Activated B cell treated with CpG ODN at 0.5 μM for 24 hours (primary cell): ENCODE measurements at regions of chr10 and their contacts with region 1.

Region 1: DNA sequence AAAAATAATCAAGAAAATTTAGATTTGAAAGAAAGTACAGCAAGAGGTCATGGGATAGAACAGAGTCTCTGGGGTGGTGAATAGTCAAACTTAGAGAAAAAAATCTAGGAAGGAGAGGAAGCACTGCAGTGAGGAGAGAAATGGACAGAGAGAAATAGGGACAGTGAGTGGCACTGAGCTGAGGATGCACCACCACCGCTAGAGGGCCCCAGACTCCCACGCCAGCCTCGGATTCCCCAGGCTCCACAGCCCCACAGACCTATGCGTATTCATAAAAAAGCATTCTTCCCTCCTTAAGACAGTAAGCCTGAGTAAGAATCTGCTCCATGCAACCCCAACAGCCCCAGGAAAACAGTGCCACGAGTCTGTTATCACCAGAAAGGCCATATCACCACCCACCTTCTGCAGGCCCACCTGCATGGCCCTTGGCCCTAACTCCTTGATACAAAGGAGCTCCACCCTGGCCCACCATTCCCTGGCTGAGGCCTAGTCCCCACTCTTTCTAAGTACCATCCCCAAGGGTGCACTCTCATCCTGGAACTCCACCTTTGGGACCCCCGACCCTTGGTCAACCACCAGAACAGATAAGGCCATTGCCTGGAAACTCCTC is 91.0 kb downstream of the ALOX5 start:
- DNase-seq: peak; percentile 70
- ATAC-seq: peak; percentile 68
- H3K4me3 Mint-ChIP-seq: peak overlapping the region; percentile 45
- H3K27ac Mint-ChIP-seq: peak overlapping the region; percentile 98
- H3K4me1 Mint-ChIP-seq: peaks cover 90% of the 10 kb centered on the region
- H3K27me3 Mint-ChIP-seq: no peaks in the 10 kb centered on the region
- CTCF ChIP-seq: peak; percentile 60

Region 2: GRCh38 chr10:44974628-44975431 is 490.2 kb before region 1 on chr10:
- CTCF ChIA-PET with region 1: no interaction called
- POLR2A ChIA-PET with region 1: no interaction called
- intact Hi-C with region 1: no loop called
- DNase-seq: peak; percentile 81
- ATAC-seq: peak; percentile 90
- H3K4me3 Mint-ChIP-seq: peak overlapping the region; percentile 80
- H3K27ac Mint-ChIP-seq: peak overlapping the region; percentile 75
- H3K4me1 Mint-ChIP-seq: peaks cover 28% of the 10 kb centered on the region
- H3K27me3 Mint-ChIP-seq: no peaks in the 10 kb centered on the region
- CTCF ChIP-seq: no peak

Region 3: DNA sequence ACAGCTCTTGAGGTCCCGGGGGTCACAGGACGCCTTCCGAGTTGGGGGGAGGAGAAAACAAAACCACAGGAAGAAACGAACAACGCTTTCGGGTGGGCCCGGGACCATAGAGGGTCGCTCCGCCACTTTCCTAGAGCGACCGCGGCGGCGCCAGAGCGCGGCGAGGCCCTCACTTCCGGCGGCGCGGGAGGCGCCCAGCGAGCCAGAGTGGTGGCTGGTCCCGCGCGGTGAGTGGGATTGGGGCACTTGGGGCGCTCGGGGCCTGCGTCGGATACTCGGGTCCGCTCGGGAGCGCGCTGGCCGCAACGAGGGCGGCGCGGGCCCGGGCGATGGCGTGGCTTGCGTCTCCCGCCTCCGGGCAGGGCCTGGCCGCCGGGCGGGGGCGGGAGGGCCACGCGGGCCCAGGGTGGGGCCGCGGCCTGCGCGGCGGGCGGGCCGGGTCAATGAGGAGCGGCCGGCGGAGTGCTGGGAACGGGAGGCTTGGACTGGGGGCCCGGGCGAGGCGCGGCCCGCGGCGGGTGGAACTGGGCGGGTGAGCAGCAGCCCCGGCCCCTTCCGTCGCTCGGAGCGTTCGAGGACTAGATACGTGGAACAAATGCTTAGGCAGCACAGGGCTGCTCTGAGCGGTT is 464.2 kb before region 1 on chr10 and contains the start of gene ZNF22:
- CTCF ChIA-PET with region 1: no interaction called
- POLR2A ChIA-PET with region 1: no interaction called
- intact Hi-C with region 1: loop called (anchors 5 kb)
- DNase-seq: peak; percentile 76
- ATAC-seq: peak; percentile 82
- H3K4me3 Mint-ChIP-seq: peak within 1 kb of the TSS; percentile 90
- H3K27ac Mint-ChIP-seq: peak within 1 kb of the TSS; percentile 93
- H3K4me1 Mint-ChIP-seq: peaks cover 25% of the 10 kb centered on the region
- H3K27me3 Mint-ChIP-seq: no peaks in the 10 kb centered on the region
- CTCF ChIP-seq: no peak
- total RNA-seq, gene ZNF22: 34.2 and 37.5 TPM in 2 replicates

Region 4: DNA sequence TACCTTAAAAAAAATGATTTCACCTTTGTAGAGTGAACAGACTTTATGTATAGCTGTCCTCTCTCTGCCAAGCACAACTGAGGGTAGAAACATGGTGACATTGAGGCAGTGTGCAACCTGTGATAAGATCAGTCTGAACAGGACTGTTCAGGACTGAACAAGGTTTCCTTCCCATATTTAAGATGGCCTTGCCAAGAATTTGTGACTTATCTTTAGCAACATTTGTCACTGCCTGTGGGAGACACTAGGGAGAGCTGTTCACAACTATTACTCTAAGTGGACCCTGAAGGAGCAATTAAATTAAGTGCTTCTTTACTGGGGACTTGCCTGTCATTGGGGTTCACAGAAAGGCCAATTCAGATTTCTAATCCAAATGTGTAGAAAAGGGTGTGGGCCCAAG is 156.4 kb before region 1 on chr10:
- CTCF ChIA-PET with region 1: interaction called, 5 read pairs
- POLR2A ChIA-PET with region 1: interaction called, 5 read pairs
- intact Hi-C with region 1: loop called (anchors 1 kb)
- DNase-seq: no peak
- ATAC-seq: peak; percentile 18
- H3K4me3 Mint-ChIP-seq: no peak overlapping the region
- H3K27ac Mint-ChIP-seq: no peak overlapping the region
- H3K4me1 Mint-ChIP-seq: peaks cover 3% of the 10 kb centered on the region
- H3K27me3 Mint-ChIP-seq: no peaks in the 10 kb centered on the region
- CTCF ChIP-seq: no peak

Region 5: DNA sequence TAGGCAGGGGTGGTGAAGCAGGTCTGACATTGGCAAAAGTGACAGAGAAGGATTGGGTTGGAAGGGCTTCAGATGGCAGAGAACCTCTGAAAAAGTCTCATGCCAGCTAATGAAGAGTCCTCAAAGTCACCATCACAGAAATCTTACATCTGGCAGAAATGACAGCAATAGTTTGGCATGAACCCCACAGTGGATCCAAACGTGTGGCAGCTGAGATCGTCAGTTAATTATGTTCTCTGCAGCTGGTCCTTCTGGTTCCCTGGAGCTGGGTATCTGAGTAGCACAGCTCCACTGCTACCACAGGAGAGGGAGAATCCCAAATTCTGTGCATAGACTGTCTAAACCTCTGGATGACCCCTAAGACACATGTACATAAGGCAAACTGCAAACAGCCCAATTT is 17.6 kb before region 1 on chr10:
- CTCF ChIA-PET with region 1: interaction called, 5 read pairs
- POLR2A ChIA-PET with region 1: interaction called, 10 read pairs
- intact Hi-C with region 1: no loop called
- DNase-seq: no peak
- ATAC-seq: no peak
- H3K4me3 Mint-ChIP-seq: no peak overlapping the region
- H3K27ac Mint-ChIP-seq: peak overlapping the region; percentile 26
- H3K4me1 Mint-ChIP-seq: peaks cover 5% of the 10 kb centered on the region
- H3K27me3 Mint-ChIP-seq: no peaks in the 10 kb centered on the region
- CTCF ChIP-seq: no peak

Region 6: DNA sequence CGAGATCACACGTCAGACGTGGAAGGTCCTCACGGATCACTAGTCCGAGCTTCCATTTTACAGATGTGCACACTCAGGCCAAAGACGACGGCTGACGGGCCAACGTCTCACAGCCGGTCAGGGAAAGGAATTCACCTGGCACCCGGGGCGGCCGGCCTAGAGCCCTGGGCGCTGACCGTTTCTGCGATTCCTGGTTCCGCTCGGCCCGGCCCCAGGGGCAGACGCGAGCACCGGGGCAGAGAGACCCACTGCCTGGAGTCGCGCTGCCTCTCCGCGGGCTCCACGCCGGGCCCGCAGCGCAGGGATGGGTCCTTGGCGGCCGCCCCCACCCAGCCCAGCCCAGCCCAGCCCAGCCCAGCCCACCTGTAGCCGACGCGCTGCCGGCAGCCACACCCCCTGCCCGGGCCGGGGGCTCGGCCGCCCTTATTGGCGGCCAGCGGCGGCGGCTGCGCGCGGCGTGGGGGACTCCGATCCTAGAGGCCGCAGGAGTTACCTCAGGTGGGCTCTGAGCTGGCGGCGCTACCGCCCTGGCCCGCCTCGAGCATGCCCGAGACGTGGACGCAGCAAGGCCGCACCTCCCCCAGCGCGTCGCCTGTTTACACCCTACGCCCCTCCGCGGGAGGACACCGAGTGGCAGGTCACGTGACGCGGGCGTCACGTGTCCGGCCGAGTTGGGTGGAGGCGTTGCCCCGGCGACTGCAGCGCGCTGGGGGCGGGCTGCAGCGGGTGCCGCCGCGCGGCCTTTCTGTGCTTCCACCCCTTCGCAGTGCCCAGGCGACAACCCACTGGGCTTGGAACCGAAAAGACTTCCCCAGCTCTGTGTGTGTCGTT is 129.4 kb after region 1 on chr10:
- CTCF ChIA-PET with region 1: interaction called, 9 read pairs
- POLR2A ChIA-PET with region 1: interaction called, 4 read pairs
- intact Hi-C with region 1: loop called (anchors 1 kb)
- DNase-seq: peak; percentile 91
- ATAC-seq: peak; percentile 88
- H3K4me3 Mint-ChIP-seq: peak overlapping the region; percentile 86
- H3K27ac Mint-ChIP-seq: peak overlapping the region; percentile 91
- H3K4me1 Mint-ChIP-seq: peaks cover 42% of the 10 kb centered on the region
- H3K27me3 Mint-ChIP-seq: no peaks in the 10 kb centered on the region
- CTCF ChIP-seq: no peak

Region 7: GRCh38 chr10:46022978-46023702 is 558.1 kb after region 1 on chr10:
- CTCF ChIA-PET with region 1: no interaction called
- POLR2A ChIA-PET with region 1: no interaction called
- intact Hi-C with region 1: loop called (anchors 5 kb)
- DNase-seq: peak; percentile 71
- ATAC-seq: peak; percentile 94
- H3K4me3 Mint-ChIP-seq: peak overlapping the region; percentile 87
- H3K27ac Mint-ChIP-seq: peak overlapping the region; percentile 53
- H3K4me1 Mint-ChIP-seq: peaks cover 80% of the 10 kb centered on the region
- H3K27me3 Mint-ChIP-seq: no peaks in the 10 kb centered on the region
- CTCF ChIP-seq: no peak